Panc1 (cell line): ENCODE measurements at regions of chr3 and their contacts with region 1.

Region 1: GRCh38 chr3:169591983-169592644 is 71.4 kb downstream of the MECOM start:
- DNase-seq: no peak
- ATAC-seq: no peak
- H3K4me3 ChIP-seq: no peak overlapping the region
- H3K27ac ChIP-seq: no peak overlapping the region
- H3K4me1 ChIP-seq: no peaks in the 10 kb centered on the region
- H3K27me3 ChIP-seq: no peaks in the 10 kb centered on the region
- CTCF ChIP-seq: no peak

Region 2: DNA sequence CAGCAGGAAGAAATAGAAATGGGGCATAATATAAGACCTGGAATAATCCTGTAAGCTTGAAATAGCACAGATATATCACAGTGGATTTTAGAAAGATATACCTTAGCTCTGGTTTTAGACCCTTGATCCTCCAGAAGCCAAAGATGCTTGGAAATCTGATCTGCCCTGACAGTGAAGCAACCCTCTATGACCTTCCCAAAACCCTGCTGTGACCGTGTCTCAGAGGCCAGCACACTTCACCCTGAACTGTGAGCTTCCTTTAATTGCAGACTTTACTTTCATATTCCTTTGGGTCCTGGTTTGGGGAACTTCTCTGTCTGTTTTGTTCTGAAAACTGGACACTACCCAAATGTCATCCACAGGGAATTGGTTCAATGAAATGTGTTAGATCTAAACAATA is 58.4 kb after region 1 on chr3:
- CTCF ChIA-PET with region 1: no interaction called
- POLR2A ChIA-PET with region 1: no interaction called
- in situ Hi-C with region 1: no loop called
- intact Hi-C with region 1: loop called (anchors 2 kb)
- DNase-seq: no peak
- ATAC-seq: no peak
- H3K4me3 ChIP-seq: no peak overlapping the region
- H3K27ac ChIP-seq: no peak overlapping the region
- H3K4me1 ChIP-seq: no peaks in the 10 kb centered on the region
- H3K27me3 ChIP-seq: peaks cover 21% of the 10 kb centered on the region
- CTCF ChIP-seq: no peak